Activated CD4-positive, alpha-beta T cell treated with anti-CD3 and anti-CD28 coated beads for 36 hours (primary cell): ENCODE measurements at regions of chr20 and their contacts with region 1.

Region 1: GRCh38 chr20:16729565-16730456 is at the start of gene SNRPB2:
- DNase-seq: peak; percentile 95
- ATAC-seq: peak; percentile 95
- H3K4me3 Mint-ChIP-seq: peak within 1 kb of the TSS; percentile 95
- H3K27ac Mint-ChIP-seq: peak within 1 kb of the TSS; percentile 98
- H3K4me1 Mint-ChIP-seq: peaks cover 46% of the 10 kb centered on the region
- H3K27me3 Mint-ChIP-seq: peaks cover 9% of the 10 kb centered on the region
- total RNA-seq, gene SNRPB2: 122 to 129 TPM

Region 2: DNA sequence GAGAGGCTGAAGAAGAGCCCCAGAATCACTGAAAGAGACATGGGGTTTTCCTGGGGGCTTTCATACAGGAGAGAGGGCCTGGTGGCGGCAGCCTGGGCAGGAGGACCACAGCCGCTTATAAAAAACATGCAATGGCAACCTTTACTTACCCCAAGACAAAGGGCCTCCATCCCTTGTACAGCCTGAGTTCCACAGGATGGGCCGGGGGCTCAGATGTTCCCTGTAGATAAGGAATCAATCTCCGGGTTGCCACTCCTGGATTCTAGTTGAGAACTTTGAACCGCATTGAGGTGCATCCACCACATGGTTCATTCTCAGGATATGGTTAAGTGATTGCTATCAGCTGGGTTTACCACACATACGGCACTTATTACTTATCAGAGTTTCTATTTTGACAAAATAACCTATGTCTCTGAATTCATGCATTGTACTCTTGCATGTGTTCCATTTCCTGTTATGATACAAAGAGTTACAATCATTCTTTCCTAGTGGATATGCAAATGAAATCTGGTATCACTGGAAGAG is 834.2 kb before region 1 on chr20:
- CTCF ChIA-PET with region 1: no interaction called
- POLR2A ChIA-PET with region 1: no interaction called
- intact Hi-C with region 1: loop called in 1 of 2 experiments (anchors 10 kb)
- DNase-seq: peak; percentile 21
- ATAC-seq: peak; percentile 82
- H3K4me3 Mint-ChIP-seq: no peak overlapping the region
- H3K27ac Mint-ChIP-seq: no peak overlapping the region
- H3K4me1 Mint-ChIP-seq: peaks cover 13% of the 10 kb centered on the region
- H3K27me3 Mint-ChIP-seq: no peaks in the 10 kb centered on the region

Region 3: GRCh38 chr20:16573001-16573965 is 156.5 kb before region 1 on chr20 and contains the start of gene KIF16B:
- CTCF ChIA-PET with region 1: no interaction called
- POLR2A ChIA-PET with region 1: no interaction called
- intact Hi-C with region 1: loop called (anchors 1 kb)
- DNase-seq: peak; percentile 92
- ATAC-seq: peak; percentile 87
- H3K4me3 Mint-ChIP-seq: peak within 1 kb of the TSS; percentile 85
- H3K27ac Mint-ChIP-seq: peak within 1 kb of the TSS; percentile 79
- H3K4me1 Mint-ChIP-seq: peaks cover 42% of the 10 kb centered on the region
- H3K27me3 Mint-ChIP-seq: no peaks in the 10 kb centered on the region
- total RNA-seq, gene KIF16B: 7.5 to 8.7 TPM

Region 4: GRCh38 chr20:17968366-17969279 is 1238.8 kb after region 1 on chr20 and contains the starts of genes MGME1 and SNX5:
- CTCF ChIA-PET with region 1: no interaction called
- POLR2A ChIA-PET with region 1: no interaction called
- intact Hi-C with region 1: loop called in 1 of 2 experiments (anchors 1 kb)
- DNase-seq: peak; percentile 100
- ATAC-seq: peak; percentile 91
- H3K4me3 Mint-ChIP-seq: peak within 1 kb of the TSS; percentile 87
- H3K27ac Mint-ChIP-seq: peak within 1 kb of the TSS; percentile 99
- H3K4me1 Mint-ChIP-seq: peaks cover 49% of the 10 kb centered on the region
- H3K27me3 Mint-ChIP-seq: no peaks in the 10 kb centered on the region
- total RNA-seq, gene MGME1: 24.1 to 29.7 TPM
- total RNA-seq, gene SNX5: 204 to 227 TPM